ENCODE measurements at regions of chr1 and their contacts with region 1.

Region 1: DNA sequence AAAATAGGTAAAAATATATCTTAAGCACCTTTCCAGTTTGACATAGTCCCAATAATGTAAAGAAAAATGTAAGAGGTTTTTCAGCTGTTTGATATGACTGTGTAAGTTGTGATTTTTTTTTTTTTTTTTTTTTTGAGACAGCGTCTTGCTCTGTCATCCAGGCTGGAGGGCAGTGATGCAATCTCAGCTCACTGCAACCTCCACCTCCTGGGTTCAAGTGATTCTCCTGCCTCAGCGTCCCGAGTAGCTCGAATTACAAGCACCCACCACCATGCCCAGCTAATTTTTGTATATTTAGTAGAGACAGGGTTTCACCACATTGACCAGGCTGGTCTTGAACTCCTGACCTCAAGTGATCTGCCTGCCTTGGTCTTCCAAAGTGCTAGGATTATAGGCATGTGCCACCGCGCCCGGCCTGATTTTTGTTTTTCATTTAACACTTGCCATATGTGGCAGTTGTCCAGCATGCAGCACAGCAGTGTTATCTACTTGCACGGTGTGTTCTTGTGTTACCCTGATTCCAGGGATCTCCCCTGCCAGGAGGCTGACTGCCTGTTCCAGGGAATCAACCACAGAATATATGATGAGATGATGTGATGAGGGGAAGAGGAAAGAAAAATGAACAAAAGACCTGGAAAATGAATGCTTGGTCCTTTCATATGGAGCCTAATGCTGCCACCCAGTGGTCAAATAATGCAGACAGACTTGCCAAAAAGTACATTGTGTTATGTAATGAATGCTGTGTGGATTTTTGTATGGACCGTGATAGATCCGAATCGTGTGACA is 79.0 kb downstream of the RAVER2 start:
- DNase-seq: peak; percentile 81
- ATAC-seq: peak; percentile 84

Region 2: DNA sequence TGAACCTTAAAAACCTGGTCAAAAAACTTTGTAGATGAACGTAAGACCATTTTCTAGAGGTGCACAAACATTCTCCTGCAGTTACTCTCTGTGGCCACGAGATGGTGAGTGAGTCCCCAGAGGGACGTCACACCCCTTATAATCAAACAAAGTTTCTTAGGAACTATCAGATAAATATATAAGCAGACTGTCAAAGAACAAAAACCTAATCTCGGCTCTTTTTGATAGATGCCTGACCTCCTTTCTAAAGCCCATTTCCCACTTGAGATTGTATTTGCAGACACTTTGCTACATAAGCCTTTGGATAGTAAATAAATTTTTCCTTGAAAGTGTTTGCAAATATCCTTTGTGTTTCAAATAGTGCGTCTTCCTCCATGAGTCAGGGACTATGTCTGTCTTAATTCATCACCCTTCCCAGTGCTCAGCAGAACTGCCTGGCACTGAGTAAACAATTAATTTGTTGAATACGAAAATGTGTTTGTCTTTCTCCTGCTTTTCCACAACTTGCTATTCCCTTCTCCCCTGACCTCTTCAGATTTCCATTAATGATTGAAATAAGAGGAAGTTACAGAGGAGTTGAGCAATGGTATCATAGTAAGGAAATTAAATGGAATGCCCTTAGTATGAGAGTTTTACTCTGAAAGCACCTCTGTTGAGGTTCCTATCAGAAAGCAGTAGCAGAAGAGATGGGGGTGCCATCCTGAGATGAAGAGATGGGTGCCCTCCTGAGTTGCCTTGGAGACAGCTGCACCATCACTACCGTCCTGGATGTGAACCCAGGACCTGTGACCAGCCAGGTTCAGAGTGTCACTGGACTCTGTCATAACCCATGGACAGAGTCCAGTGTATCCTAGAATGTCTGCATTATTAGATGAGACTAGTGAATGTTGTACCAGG is 136.8 kb before region 1 on chr1:
- intact Hi-C with region 1: loop called (anchors 10 kb)
- DNase-seq: no peak
- ATAC-seq: peak; percentile 65

Measured in sciatic nerve (tissue), 2 donors.